ENCODE measurements at regions of chr20 and their contacts with region 1.

Region 1: GRCh38 chr20:16517946-16518783 is 55.1 kb downstream of the KIF16B start:
- DNase-seq: peak; percentile 69 to 89
- ATAC-seq: peak; percentile 97 to 99
- H3K4me3 ChIP-seq: no peak overlapping the region
- H3K27ac ChIP-seq: no peak overlapping the region
- H3K4me1 ChIP-seq: no peaks in the 10 kb centered on the region
- CTCF ChIP-seq: peak; percentile 86
- EP300 ChIP-seq: no peak
- POLR2A ChIP-seq: no peak
- RAD21 ChIP-seq: peak; percentile 89 to 90

Region 2: DNA sequence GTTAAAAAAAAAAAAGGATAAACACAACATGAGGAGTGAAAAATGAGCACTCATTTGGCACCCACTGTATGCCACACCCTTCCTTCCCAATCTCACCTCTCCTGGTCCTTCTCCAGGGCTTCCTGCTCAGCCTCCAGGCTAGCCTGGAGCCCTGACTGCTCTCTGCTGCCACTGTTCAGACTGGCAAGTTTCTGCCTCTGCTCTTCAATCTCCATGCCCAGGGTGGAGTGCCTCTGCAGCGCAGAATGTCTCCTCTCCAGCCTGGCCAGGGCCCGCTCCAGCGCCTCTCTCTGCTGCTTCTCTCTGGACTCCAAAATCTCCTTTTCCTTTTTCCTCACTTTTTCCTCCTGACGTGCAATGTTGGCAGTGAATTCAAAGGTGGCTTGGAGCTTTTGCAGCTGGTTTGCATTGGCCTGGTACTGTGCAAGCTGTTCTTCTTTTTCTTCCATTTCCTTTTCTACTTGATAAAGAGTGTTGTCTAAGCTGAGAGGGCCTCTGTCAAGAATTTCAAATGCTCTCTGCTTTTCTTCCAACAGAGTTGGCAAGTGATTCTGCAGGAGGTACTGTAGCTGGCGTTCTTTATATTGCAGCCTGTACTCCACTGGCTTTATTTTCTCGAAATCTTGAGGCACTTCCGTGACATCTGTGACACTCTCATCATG is 139.3 kb before region 1 on chr20:
- CTCF ChIA-PET with region 1: no interaction called
- POLR2A ChIA-PET with region 1: no interaction called
- DNase-seq: no peak
- ATAC-seq: peak; percentile 72 to 80; a peak in 5 of 6 replicates
- H3K4me3 ChIP-seq: no peak overlapping the region
- H3K27ac ChIP-seq: no peak overlapping the region
- H3K4me1 ChIP-seq: no peaks in the 10 kb centered on the region
- CTCF ChIP-seq: no peak
- EP300 ChIP-seq: no peak
- POLR2A ChIP-seq: no peak
- RAD21 ChIP-seq: no peak

Region 3: DNA sequence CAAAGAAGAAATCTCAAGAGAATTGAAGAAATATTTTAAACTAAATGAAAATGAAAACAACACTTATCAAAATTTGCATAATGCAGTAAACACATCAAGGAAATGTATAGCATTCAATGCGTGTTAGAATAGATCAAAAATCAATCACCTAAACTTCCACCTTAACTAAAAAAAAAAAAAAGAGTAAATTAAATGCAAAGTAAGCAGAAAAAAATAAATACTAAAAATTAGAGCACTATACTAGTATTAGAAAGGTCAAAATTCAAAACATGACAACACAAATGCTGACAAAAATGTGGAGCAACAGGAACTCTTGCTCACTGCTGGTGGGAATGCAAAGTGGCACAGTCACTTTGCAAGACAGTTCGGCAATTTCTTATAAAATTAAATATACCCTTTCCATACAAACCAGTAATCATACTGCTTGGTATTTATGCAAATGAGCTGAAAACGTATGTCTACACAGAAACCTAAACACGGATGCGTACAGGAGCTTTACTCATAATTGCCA is 48.7 kb before region 1 on chr20:
- CTCF ChIA-PET with region 1: no interaction called
- POLR2A ChIA-PET with region 1: no interaction called
- DNase-seq: no peak
- ATAC-seq: no peak
- H3K4me3 ChIP-seq: no peak overlapping the region
- H3K27ac ChIP-seq: no peak overlapping the region
- H3K4me1 ChIP-seq: 0 out of 3 replicates have a peak, but pooled peaks cover under 1% of the 10 kb centered on the region
- CTCF ChIP-seq: no peak
- EP300 ChIP-seq: no peak
- POLR2A ChIP-seq: no peak
- RAD21 ChIP-seq: no peak

Region 4: GRCh38 chr20:16539280-16540021 is 21.3 kb after region 1 on chr20:
- CTCF ChIA-PET with region 1: interaction called, 13 read pairs
- POLR2A ChIA-PET with region 1: no interaction called
- DNase-seq: peak in 1 of 2 experiments; percentile 26
- ATAC-seq: no peak
- H3K4me3 ChIP-seq: no peak overlapping the region
- H3K27ac ChIP-seq: no peak overlapping the region
- H3K4me1 ChIP-seq: peaks cover 6% of the 10 kb centered on the region; the same call in 1 of the 3 replicates
- CTCF ChIP-seq: no peak
- EP300 ChIP-seq: no peak
- POLR2A ChIP-seq: no peak
- RAD21 ChIP-seq: no peak

Region 5: DNA sequence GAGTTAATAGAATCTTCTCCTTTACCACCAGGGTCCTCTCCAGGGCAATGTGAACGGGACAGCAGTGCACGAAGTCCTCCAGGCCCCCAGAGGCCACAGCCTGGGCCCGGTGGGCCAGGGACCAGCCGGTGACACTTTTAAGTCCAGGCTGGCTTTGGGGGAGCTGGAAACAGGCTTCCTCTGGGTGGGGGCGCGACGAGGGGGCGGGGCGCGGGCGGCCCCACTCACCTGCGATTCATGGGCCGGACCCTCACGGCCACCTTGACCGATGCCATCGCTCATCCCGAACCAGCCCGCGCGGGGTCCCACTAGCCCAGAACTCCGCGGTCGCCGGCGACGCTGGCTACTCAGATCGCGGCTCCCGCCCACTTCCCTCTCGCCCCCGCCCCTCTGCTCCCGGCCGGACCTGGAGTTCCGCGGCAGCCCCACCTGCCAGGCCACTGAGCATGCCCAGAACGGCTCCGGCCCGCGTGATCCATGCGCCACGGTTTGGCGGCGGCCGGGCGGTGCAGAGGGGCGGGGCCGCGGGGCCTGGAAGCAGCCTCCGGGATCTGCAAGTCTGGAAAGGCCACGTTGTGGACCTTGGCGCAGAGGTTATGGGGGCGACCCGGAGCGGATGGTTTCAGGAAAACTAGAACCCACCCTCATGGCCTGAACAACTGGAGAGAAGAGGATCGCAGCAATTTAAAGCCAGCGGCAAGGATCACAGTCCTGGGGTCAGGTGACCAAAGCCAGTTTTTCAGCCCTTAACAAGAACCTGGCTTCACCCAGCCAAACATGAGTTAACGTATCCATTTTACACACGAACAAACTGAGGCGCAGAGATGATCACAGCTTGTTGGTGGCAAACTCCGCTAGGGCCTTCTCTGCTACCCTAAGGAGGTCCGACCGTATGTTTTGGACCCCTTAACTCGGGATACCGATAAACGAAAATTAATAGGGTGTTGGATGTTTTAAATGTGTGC is 55.1 kb after region 1 on chr20 and contains the start of gene KIF16B:
- CTCF ChIA-PET with region 1: interaction called, 14 read pairs
- POLR2A ChIA-PET with region 1: no interaction called
- DNase-seq: peak; percentile 85 to 96
- ATAC-seq: peak; percentile 75 to 85
- H3K4me3 ChIP-seq: peak within 1 kb of the TSS; percentile 63
- H3K27ac ChIP-seq: peak within 1 kb of the TSS; percentile 90 to 92
- H3K4me1 ChIP-seq: peaks cover 29% of the 10 kb centered on the region
- CTCF ChIP-seq: no peak
- EP300 ChIP-seq: no peak
- POLR2A ChIP-seq: peak; percentile 82
- RAD21 ChIP-seq: peak in 1 of 2 experiments; percentile 19; a peak in 3 of 5 replicates
- polyA plus RNA-seq, gene KIF16B: 23.3 and 27.4 TPM in 2 replicates

Region 6: DNA sequence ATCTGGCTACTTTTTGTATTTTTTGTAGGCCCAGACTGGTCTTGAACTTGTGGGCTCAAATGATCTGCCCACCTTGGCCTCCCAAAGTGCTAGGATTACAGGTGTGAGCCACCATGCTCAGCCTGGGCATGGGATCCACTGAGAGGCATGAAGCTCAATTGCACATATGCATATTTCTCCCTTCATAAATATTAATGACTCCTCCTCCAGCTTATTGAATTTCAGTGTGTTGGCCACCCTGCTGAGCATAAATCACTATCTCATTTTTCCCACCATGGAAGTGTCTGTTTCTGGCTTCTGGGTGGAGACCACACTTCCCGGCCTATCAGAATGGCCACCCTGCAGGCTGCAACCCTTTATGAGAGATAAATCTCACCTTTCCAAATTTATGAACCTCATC is 108.7 kb after region 1 on chr20:
- CTCF ChIA-PET with region 1: interaction called, 16 read pairs
- POLR2A ChIA-PET with region 1: no interaction called
- DNase-seq: no peak
- ATAC-seq: no peak
- H3K4me3 ChIP-seq: no peak overlapping the region
- H3K27ac ChIP-seq: no peak overlapping the region
- H3K4me1 ChIP-seq: no peaks in the 10 kb centered on the region
- CTCF ChIP-seq: no peak
- EP300 ChIP-seq: no peak
- POLR2A ChIP-seq: no peak
- RAD21 ChIP-seq: no peak

Region 7: DNA sequence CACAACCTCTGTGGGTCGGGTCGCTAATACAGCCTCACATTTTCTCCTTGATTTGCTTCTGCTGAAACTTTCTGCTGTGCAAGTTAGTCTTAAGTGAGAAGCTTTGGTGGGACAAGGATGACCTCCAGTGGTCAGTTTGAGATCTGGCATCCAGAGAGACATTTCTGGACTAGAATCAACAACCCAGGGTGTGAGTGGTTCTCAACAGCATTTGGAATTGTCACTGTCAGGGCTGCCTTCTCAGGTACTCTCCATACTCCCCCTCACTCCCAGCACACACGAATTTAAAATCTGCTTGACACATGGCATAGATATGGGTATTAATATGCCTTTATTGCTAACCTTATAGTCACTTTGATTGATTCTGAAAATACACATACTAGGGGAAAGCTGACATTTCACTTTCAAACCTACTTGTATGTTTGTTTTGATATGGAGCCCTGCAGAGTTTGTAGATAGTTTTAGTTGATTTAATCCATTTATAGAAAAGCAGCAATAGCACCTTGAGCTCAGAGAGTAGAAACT is 243.2 kb after region 1 on chr20:
- CTCF ChIA-PET with region 1: interaction called, 49 read pairs
- POLR2A ChIA-PET with region 1: no interaction called
- DNase-seq: peak; percentile 78 to 83
- ATAC-seq: peak; percentile 86 to 95
- H3K4me3 ChIP-seq: no peak overlapping the region
- H3K27ac ChIP-seq: no peak overlapping the region
- H3K4me1 ChIP-seq: no peaks in the 10 kb centered on the region
- CTCF ChIP-seq: peak; percentile 93
- EP300 ChIP-seq: no peak
- POLR2A ChIP-seq: no peak
- RAD21 ChIP-seq: peak; percentile 94 to 96

Region 8: DNA sequence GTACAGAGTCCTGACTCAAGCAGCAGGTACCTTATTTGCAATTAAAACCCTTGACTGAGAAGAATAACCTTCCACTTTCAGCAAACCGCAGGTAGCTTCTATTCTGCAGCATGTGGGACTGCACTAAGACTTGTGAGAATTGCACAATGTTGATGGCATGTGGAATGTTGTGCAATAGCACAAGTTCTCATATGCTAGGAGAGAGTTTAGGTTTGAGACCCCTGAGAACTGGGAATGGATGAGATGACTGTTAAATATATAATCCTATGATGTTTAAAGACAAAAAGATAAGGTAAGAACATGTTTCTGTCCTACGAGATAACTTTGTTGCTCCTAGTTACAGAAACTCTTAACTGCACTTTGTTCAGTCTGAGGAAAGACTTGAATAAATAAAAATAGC is 424.6 kb after region 1 on chr20:
- CTCF ChIA-PET with region 1: no interaction called
- POLR2A ChIA-PET with region 1: no interaction called
- DNase-seq: no peak
- ATAC-seq: no peak
- H3K4me3 ChIP-seq: no peak overlapping the region
- H3K27ac ChIP-seq: no peak overlapping the region
- H3K4me1 ChIP-seq: no peaks in the 10 kb centered on the region
- CTCF ChIP-seq: no peak
- EP300 ChIP-seq: no peak
- POLR2A ChIP-seq: no peak
- RAD21 ChIP-seq: no peak